Adrenal gland (tissue), 19 donors: ENCODE measurements at regions of chr3 and their contacts with region 1.

Region 1: DNA sequence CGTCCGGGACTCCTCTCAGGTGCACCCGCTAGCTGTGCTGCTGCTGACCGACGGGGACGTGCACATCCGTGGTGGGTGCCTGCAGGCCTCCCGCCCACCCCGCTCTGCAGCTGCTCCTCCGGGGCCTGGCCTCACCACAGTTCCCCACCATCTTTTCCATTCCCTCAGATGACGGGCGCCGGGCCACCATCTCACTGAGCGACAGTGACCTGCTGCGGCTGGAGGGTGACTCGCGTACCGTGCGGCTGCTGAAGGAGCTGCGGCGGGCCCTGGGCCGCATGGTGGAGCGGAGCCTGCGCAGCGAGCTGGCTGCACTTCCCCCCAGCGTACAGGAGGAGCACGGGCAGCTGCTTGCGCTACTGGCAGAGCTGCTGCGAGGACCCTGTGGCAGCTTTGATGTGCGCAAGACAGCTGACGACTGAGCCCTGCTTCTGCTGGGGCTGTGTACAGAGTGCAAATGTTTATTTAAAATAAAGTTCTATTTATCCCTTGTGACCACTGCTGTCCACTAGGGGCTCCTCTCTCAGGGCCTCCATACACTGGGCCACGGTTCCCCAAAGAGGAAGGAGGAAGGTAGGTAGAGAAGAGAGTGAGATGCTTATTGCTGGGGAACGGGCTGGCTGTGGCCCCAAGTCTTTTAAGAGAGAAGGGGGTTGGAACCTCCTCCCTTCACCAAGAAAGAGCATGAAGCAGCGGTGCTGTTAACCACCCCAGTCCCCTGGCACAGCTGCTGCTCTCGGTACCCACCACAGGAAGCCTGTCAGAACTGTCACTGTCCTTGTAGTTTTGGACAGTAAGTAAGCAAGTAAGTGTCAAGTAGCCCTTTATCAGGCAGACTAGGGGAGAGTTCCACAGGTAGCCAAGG is 47.0 kb downstream of the DHX30 start:
- DNase-seq: no peak
- H3K4me3 ChIP-seq: no peak overlapping the region
- H3K27ac ChIP-seq: no peak overlapping the region
- H3K4me1 ChIP-seq: no peaks in the 10 kb centered on the region
- H3K27me3 ChIP-seq: no peaks in the 10 kb centered on the region
- CTCF ChIP-seq: peak in 5 of 6 experiments; percentile 22 to 42 (median 25)
- POLR2A ChIP-seq: no peak

Region 2: DNA sequence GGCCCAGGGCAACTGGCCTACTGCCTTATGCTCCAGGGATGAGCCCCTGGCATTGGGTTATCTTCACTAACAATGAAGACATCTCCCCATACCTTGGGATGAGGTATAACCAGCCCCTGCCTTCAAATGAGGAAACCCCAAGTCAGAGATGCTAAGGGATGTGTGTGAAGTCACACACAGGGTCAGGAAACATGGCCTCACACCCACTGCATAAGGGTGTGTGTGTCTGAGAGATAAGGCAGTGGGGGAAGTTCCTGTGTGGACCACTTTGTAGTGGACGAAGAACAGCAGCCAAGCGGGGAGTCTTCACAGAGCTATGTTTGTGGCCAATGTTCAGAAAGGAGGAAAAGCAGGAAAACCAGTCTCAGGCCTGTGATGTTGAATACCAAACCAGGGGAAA is 346.9 kb before region 1 on chr3:
- intact Hi-C with region 1: no loop called
- DNase-seq: no peak
- H3K4me3 ChIP-seq: no peak overlapping the region
- H3K27ac ChIP-seq: peak overlapping the region in 1 of 5 donors; percentile 20
- H3K4me1 ChIP-seq: no peaks in the 10 kb centered on the region
- H3K27me3 ChIP-seq: no peaks in the 10 kb centered on the region
- CTCF ChIP-seq: no peak
- POLR2A ChIP-seq: no peak

Region 3: DNA sequence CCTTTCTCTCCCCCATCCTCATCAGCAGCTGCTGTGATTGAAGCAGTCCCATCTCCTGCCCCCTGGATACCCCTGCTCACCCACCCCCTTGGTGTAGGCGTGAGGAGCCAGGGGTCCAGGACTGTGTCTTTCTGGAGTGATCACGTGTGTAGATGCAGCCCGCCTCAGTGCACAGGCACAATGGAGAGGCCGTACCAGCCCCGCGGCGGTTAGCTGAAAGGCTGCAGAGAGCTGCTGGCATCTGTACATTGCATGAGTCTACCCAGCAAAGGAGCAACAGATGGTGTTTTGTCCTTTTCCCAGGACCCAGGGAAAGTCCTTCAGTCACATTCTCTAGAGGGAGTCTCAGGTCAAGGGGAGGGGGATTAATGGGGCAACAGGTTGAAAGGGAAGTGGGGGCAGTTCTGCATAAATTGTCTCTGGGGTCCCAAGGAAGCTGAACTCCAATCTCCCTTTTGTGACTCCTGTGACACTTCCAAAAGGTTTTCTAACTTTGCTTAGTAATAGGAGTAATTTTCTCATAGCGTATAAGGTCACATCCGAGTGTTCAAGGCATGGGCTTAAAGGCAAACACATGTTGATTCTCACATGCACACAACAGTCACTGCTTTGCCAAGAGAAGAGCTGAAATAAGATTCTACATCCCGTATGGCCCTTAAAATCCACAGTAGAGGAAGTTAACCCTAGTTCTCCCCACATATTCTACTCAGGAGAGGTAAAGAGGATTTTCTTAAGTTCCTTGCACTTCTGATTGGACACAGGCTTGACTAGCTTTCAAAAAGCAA is 278.3 kb before region 1 on chr3:
- intact Hi-C with region 1: no loop called
- DNase-seq: no peak
- H3K4me3 ChIP-seq: no peak overlapping the region
- H3K27ac ChIP-seq: no peak overlapping the region
- H3K4me1 ChIP-seq: no peaks in the 10 kb centered on the region
- H3K27me3 ChIP-seq: no peaks in the 10 kb centered on the region
- CTCF ChIP-seq: no peak
- POLR2A ChIP-seq: no peak

Region 4: DNA sequence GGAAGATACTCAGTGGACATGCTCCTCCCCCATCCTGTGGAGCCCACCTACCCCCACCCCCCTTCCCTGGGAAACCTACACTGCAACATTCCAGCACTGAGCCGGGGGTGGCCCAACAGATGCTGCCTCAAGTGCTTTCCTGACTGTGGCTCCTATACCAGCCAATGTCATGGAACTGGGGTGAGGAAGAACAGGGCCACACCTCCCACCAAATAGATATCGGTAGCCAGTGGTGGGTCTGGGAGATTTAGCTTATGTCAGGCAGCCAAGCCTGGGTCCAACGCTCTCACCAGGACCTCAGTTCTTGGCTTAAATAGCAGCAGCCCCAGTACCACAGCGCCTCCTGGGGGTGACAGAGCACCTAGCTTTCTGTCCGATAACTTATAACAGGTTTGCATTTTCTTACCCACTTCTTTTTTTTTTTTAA is 308.0 kb after region 1 on chr3:
- intact Hi-C with region 1: loop called in 1 of 2 experiments (anchors 5 kb)
- DNase-seq: peak; percentile 40 to 78 (median 62)
- H3K4me3 ChIP-seq: no peak overlapping the region
- H3K27ac ChIP-seq: no peak overlapping the region
- H3K4me1 ChIP-seq: no peaks in the 10 kb centered on the region
- H3K27me3 ChIP-seq: no peaks in the 10 kb centered on the region
- CTCF ChIP-seq: peak; percentile 31 to 62 (median 55)
- POLR2A ChIP-seq: no peak

Region 5: GRCh38 chr3:48318783-48319468 is 469.0 kb after region 1 on chr3:
- intact Hi-C with region 1: no loop called
- DNase-seq: no peak
- H3K4me3 ChIP-seq: no peak overlapping the region
- H3K27ac ChIP-seq: no peak overlapping the region
- H3K4me1 ChIP-seq: no peaks in the 10 kb centered on the region
- H3K27me3 ChIP-seq: no peaks in the 10 kb centered on the region
- CTCF ChIP-seq: no peak
- POLR2A ChIP-seq: no peak